ENCODE measurements at regions of chr1 and their contacts with region 1.

Region 1: DNA sequence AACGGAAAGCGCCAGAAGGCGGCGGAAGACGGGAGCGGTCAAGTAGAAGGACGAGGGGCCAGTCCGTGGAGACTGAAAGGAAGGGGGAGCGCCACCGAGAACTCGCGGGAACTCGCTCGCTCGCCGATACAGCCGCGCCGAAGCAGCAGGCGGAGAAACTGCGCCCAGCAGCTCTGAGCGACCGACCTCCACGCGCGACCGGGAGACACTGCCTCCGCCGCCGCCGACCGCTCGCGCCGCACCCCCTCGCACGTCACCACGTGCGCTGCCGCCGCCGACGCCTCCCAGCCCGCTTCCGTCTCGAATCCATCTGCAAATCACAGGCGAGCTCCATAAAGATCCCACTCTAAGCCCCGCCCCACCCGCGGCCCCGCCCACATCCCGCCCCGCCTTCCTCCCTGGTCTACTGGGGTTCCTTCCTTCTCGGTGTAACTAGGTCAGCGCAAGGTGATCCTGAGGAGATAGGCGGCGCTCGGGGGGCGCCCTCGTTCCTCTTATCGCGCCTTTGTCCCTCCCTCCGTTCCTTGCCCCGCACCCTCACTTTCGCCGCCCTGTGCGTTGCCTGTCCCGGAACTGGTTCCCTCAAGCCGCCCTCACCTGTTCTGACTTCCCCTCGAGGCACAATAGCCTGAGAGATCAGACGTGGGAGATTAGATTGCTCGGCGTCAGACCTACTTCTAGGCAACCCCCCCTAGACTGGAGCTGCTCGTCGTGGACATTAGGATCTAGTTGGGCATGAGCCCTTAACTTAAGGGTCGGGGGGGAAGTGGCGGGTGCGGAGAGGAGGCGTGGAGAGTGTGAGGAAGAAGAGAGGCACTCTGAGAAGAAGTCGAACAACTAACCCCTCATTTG is at the start of gene IVNS1ABP:
- DNase-seq: peak; percentile 96
- H3K4me3 Mint-ChIP-seq: peak within 1 kb of the TSS; percentile 95
- H3K27ac Mint-ChIP-seq: peak within 1 kb of the TSS; percentile 96
- H3K4me1 Mint-ChIP-seq: peaks cover 50% of the 10 kb centered on the region
- H3K27me3 Mint-ChIP-seq: no peaks in the 10 kb centered on the region
- total RNA-seq, gene IVNS1ABP: 136 to 144 TPM

Region 2: GRCh38 chr1:185156854-185157598 is 160.2 kb before region 1 on chr1 and contains the starts of genes SWT1 and TRMT1L:
- CTCF ChIA-PET with region 1: interaction called, 3 read pairs
- POLR2A ChIA-PET with region 1: interaction called, 30 read pairs
- DNase-seq: peak; percentile 99
- H3K4me3 Mint-ChIP-seq: peak within 1 kb of the TSS; percentile 88
- H3K27ac Mint-ChIP-seq: peak within 1 kb of the TSS; percentile 95
- H3K4me1 Mint-ChIP-seq: peaks cover 63% of the 10 kb centered on the region
- H3K27me3 Mint-ChIP-seq: no peaks in the 10 kb centered on the region
- total RNA-seq, gene SWT1: 4.8 to 5.0 TPM
- total RNA-seq, gene TRMT1L: 29.8 to 35.8 TPM

Region 3: DNA sequence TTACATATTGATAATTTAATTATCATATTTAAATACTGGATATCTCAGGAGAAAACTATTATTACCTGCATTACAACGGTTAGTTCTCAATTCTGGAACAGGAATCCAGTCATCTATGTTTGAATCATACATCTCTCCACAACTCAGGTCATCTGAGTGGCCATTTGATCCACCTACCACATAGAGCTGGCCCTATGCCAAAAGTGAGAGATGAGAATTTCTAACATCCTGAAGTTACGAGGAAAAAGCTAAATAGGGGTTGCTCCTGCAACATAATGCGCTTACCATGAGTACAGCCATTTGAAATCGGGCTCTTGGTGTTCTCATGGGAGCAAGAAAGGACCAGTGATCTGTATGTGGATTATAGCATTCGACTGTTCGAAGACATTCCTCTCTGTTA is 17.1 kb before region 1 on chr1:
- CTCF ChIA-PET with region 1: no interaction called
- POLR2A ChIA-PET with region 1: interaction called, 20 read pairs
- DNase-seq: no peak
- H3K4me3 Mint-ChIP-seq: no peak overlapping the region
- H3K27ac Mint-ChIP-seq: no peak overlapping the region
- H3K4me1 Mint-ChIP-seq: peaks cover 4% of the 10 kb centered on the region
- H3K27me3 Mint-ChIP-seq: no peaks in the 10 kb centered on the region

Region 4: GRCh38 chr1:185420588-185421081 is 103.4 kb after region 1 on chr1:
- CTCF ChIA-PET with region 1: no interaction called
- POLR2A ChIA-PET with region 1: interaction called, 26 read pairs
- DNase-seq: peak; percentile 60
- H3K4me3 Mint-ChIP-seq: peak overlapping the region; percentile 35
- H3K27ac Mint-ChIP-seq: peak overlapping the region; percentile 91
- H3K4me1 Mint-ChIP-seq: peaks cover 40% of the 10 kb centered on the region
- H3K27me3 Mint-ChIP-seq: no peaks in the 10 kb centered on the region

Region 5: GRCh38 chr1:185566995-185567394 is 249.7 kb after region 1 on chr1:
- CTCF ChIA-PET with region 1: interaction called, 3 read pairs
- POLR2A ChIA-PET with region 1: interaction called, 62 read pairs
- DNase-seq: peak; percentile 51
- H3K4me3 Mint-ChIP-seq: no peak overlapping the region
- H3K27ac Mint-ChIP-seq: peak overlapping the region; percentile 76
- H3K4me1 Mint-ChIP-seq: peaks cover 56% of the 10 kb centered on the region
- H3K27me3 Mint-ChIP-seq: no peaks in the 10 kb centered on the region

Region 6: GRCh38 chr1:185681034-185681633 is 363.9 kb after region 1 on chr1:
- CTCF ChIA-PET with region 1: interaction called, 8 read pairs
- POLR2A ChIA-PET with region 1: interaction called, 22 read pairs
- DNase-seq: peak; percentile 24
- H3K4me3 Mint-ChIP-seq: no peak overlapping the region
- H3K27ac Mint-ChIP-seq: no peak overlapping the region
- H3K4me1 Mint-ChIP-seq: peaks cover 22% of the 10 kb centered on the region
- H3K27me3 Mint-ChIP-seq: no peaks in the 10 kb centered on the region

Measured in activated CD4-positive, alpha-beta memory T cell treated with anti-CD3 and anti-CD28 coated beads, Interleukin-2, amount 10 ng/mL, durations not matched to agents 7 days and 5 days (primary cell).